ENCODE measurements at regions of chr19 and their contacts with region 1.

Region 1: GRCh38 chr19:55516878-55517620 is 19.9 kb downstream of the SBK2 start:
- ATAC-seq: peak; percentile 95 to 99 (median 98)
- H3K4me3 ChIP-seq: peak overlapping the region; percentile 18 to 33 (median 28)
- H3K27ac ChIP-seq: peak overlapping the region; percentile 32 to 66
- H3K4me1 ChIP-seq: peaks cover 4% of the 10 kb centered on the region in 2 donors

Region 2: GRCh38 chr19:55247608-55248099 is 269.4 kb before region 1 on chr19:
- in situ Hi-C with region 1: no loop called
- ATAC-seq: peak in 6 of 8 experiments; percentile 31 to 97 (median 80)
- H3K4me3 ChIP-seq: no peak overlapping the region
- H3K27ac ChIP-seq: no peak overlapping the region
- H3K4me1 ChIP-seq: no peaks in the 10 kb centered on the region

Region 3: GRCh38 chr19:55599468-55600279 is 82.6 kb after region 1 on chr19 and contains the start of gene FIZ1:
- in situ Hi-C with region 1: loop called in 1 of 9 experiments (anchors 10 kb)
- ATAC-seq: peak; percentile 75 to 83 (median 80)
- H3K4me3 ChIP-seq: peak within 1 kb of the TSS; percentile 68 to 94 (median 90)
- H3K27ac ChIP-seq: peak within 1 kb of the TSS; percentile 99 to 100
- H3K4me1 ChIP-seq: peaks cover 13% of the 10 kb centered on the region in 2 donors
- total RNA-seq, gene FIZ1: 5.0 to 11.6 (median 8.3) TPM

Region 4: DNA sequence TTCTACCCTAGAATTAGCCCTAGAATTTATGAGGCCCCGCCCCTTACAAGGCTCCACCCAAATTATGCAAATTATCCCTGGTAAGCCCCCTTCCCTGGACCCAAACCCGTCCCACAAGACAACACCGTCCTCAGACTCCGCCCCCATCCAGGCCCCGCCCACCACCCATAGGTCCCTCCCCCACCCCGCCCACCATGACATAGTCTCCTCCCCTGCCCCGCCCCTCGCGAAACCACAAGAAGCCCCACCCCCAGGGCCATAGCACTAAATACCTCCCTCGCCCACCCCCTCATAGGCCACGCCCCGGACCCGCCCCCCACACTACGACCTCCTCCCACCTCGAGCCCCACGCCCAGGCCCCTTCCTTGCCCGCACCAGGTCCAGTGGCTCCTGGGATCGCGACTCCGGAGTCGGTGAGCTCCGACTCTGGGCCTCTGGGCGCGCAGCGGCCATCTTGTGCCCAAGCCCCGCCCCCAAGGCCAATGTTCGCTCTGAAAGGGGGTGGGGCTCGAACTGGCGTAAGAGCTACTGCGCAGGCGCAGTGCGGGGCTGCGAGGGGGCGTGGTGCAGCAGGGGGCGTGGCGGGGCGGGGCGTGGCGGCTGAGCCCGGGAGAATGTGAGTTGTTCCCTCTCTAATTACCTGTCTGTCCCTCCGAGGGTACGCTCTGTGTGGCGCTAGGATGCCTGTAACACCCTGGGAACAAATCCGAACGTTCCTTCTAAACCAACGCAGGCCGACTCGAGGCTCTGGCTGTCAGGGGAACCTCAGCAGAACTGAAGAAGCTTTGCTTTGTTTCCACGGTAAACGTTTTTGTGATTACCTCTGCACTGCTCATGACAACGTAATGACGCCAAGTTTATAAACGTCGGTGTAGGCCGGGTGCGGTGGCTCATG is 107.3 kb after region 1 on chr19 and contains the start of gene ZNF784:
- in situ Hi-C with region 1: loop called in 2 of 9 experiments (anchors 10 kb)
- ATAC-seq: peak; percentile 84 to 92 (median 88)
- H3K4me3 ChIP-seq: peak within 1 kb of the TSS; percentile 44 to 67 (median 47)
- H3K27ac ChIP-seq: peak within 1 kb of the TSS; percentile 95 to 96
- H3K4me1 ChIP-seq: peaks cover 0 to 5% of the 10 kb centered on the region in 2 donors
- total RNA-seq, gene ZNF784: 1.6 to 8.2 (median 4.1) TPM

Measured in motor neuron (in vitro differentiated cells).